Aorta (tissue), 5 donors: ENCODE measurements at regions of chr5 and their contacts with region 1.

Region 1: DNA sequence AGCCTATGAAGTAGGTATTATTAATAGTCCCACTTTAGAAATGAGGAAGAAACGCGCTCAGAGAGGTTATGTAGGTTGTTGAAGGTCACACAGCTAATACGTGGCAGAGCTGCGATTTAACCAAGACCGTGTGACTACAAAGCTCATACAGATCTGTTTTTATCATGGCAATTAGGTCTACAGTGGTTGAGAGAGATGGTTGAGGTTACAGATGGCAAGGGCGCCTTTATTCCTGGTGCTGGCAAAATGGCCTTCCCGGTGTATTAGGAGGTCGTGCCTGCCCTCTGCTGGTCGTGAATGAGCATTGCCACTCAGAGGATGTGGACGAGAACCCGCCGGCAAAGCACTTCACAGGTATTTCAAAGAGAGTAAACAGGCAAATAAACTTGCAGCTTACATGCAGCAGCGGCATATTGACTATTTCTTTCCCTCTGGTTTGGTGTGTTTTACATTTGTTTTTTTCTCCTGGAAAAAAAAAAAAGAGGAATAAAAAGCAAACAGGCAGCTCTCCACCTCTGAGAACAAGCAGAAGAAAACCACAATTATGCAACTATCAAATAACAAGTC is 65.3 kb upstream of the EGFLAM start:
- DNase-seq: peak; percentile 62 to 84
- ATAC-seq: peak; percentile 81
- H3K4me3 ChIP-seq: no peak overlapping the region
- H3K27ac ChIP-seq: no peak overlapping the region
- H3K4me1 ChIP-seq: no peaks in the 10 kb centered on the region
- H3K27me3 ChIP-seq: no peaks in the 10 kb centered on the region

Region 2: GRCh38 chr5:37412515-37413277 is 780.4 kb before region 1 on chr5:
- intact Hi-C with region 1: loop called (anchors 5 to 10 kb)
- DNase-seq: no peak
- ATAC-seq: no peak
- H3K4me3 ChIP-seq: no peak overlapping the region
- H3K27ac ChIP-seq: no peak overlapping the region
- H3K4me1 ChIP-seq: no peaks in the 10 kb centered on the region
- H3K27me3 ChIP-seq: no peaks in the 10 kb centered on the region

Region 3: DNA sequence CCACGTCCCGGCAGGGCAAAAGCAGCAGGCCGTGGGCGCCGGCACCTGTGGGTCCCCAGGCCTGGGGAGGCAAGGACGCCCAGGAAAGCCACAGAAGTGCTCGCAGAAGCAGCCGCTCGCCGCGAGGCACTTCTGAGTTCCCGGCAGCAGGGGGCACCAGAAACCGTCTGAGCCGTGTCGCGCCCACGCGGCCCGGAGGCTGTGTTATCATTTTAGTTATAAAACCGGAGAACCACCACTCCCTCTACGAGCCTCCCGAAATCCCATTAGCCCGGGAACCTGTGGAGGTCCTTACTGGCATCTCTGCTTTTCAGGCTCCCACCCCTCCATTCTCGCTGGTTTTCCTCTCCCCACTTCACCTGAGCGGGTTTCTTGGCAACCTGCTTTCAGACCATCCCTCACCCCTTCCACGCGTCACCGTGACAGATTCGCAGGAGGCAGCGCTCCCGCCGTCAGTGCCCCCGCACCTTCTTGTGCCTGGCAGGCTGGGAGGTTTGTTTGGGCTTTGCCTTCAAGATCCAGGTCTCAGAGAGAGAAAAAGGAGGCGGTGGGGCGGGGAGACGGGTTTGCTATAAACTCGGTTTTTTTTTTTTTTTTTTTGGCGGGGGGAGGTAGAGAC is 355.6 kb before region 1 on chr5:
- intact Hi-C with region 1: loop called (anchors 2 kb)
- DNase-seq: peak; percentile 70 to 93
- ATAC-seq: peak; percentile 82
- H3K4me3 ChIP-seq: peak overlapping the region in 1 of 2 donors; percentile 19
- H3K27ac ChIP-seq: no peak overlapping the region
- H3K4me1 ChIP-seq: peaks cover 0 to 2% of the 10 kb centered on the region in 2 donors
- H3K27me3 ChIP-seq: no peaks in the 10 kb centered on the region

Region 4: DNA sequence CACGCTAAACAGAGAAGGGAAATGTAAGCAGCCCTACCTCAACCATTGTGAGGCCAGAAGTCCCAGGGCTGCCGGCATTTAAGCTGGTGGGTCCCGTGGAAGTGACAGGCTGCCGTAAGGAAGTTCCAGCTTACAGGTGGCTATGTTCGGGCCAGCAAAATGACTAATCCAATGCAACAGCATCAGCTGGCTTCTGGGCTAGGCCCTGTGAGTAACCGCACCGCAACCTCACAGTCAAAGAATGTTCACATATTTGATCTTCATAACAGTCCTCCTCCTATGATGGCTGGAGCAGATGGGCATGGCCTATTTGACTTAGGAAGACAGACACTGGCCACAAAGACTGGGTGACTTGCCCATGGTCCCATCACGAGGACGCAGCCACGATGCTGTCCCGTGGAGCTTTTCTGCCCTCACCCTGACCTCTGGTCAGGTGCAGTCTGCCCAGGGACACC is 275.1 kb after region 1 on chr5:
- intact Hi-C with region 1: no loop called
- DNase-seq: peak; percentile 73 to 85
- ATAC-seq: peak; percentile 27
- H3K4me3 ChIP-seq: no peak overlapping the region
- H3K27ac ChIP-seq: peak overlapping the region; percentile 57 to 95
- H3K4me1 ChIP-seq: peaks cover 1 to 4% of the 10 kb centered on the region in 2 donors
- H3K27me3 ChIP-seq: no peaks in the 10 kb centered on the region

Region 5: GRCh38 chr5:38650946-38651345 is 457.8 kb after region 1 on chr5:
- intact Hi-C with region 1: no loop called
- DNase-seq: no peak
- ATAC-seq: no peak
- H3K4me3 ChIP-seq: no peak overlapping the region
- H3K27ac ChIP-seq: no peak overlapping the region
- H3K4me1 ChIP-seq: no peaks in the 10 kb centered on the region
- H3K27me3 ChIP-seq: no peaks in the 10 kb centered on the region